ENCODE measurements at regions of chr22 and their contacts with region 1.

Region 1: GRCh38 chr22:45863981-45864751 is 112.8 kb downstream of the WNT7B start:
- DNase-seq: peak; percentile 74
- ATAC-seq: peak; percentile 91
- H3K4me3 Mint-ChIP-seq: no peak overlapping the region
- H3K27ac Mint-ChIP-seq: no peak overlapping the region
- H3K4me1 Mint-ChIP-seq: peaks cover 4% of the 10 kb centered on the region
- H3K27me3 Mint-ChIP-seq: peaks cover 37% of the 10 kb centered on the region
- CTCF ChIP-seq: peak; percentile 89

Region 2: DNA sequence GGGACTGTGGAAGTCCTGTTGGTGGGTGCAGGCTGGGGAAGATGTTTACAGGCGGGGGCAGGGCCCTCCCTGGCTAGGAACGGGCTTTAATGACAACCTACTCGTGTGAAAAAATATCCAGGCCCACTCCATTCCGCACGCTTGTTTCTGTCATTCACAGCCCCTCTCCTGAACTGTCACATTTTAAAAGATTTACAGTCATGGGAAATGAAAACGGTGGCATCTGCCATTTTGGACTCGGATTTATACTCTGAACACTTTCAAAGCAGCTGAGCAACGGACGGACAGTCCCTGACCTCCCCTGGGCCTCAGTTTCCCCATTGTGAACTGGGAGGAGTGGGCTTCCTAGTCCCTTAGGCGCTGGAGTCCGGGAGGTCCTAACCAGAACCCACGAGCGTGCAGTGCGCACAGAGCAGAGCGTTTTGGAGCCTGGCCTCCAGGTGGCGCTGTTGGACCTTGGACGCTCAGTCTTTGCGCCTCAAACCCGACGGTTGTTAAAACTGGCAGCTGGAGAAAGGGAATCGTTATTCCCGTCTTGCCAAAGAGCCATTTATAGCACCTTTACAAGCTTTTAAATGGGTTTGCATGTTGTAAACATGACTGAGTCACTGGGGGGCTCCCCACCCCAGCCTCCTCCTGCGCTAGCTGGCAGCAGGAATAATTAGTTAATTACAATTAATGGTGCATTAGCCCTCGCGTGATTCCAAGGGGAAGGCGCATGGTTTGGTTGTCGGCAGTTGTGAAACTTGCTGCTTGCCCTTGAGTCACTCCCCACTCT is 286.2 kb before region 1 on chr22:
- CTCF ChIA-PET with region 1: interaction called, 3 read pairs
- POLR2A ChIA-PET with region 1: no interaction called
- intact Hi-C with region 1: loop called (anchors 10 kb)
- DNase-seq: peak; percentile 64
- ATAC-seq: peak; percentile 71
- H3K4me3 Mint-ChIP-seq: no peak overlapping the region
- H3K27ac Mint-ChIP-seq: no peak overlapping the region
- H3K4me1 Mint-ChIP-seq: peaks cover 4% of the 10 kb centered on the region
- H3K27me3 Mint-ChIP-seq: peaks cover 17% of the 10 kb centered on the region
- CTCF ChIP-seq: peak; percentile 45

Region 3: GRCh38 chr22:45903355-45904149 is 39.4 kb after region 1 on chr22:
- CTCF ChIA-PET with region 1: no interaction called
- POLR2A ChIA-PET with region 1: no interaction called
- intact Hi-C with region 1: no loop called
- DNase-seq: no peak
- ATAC-seq: no peak
- H3K4me3 Mint-ChIP-seq: no peak overlapping the region
- H3K27ac Mint-ChIP-seq: no peak overlapping the region
- H3K4me1 Mint-ChIP-seq: no peaks in the 10 kb centered on the region
- H3K27me3 Mint-ChIP-seq: peaks cover 15% of the 10 kb centered on the region
- CTCF ChIP-seq: no peak